ENCODE measurements at regions of chr11 and their contacts with region 1.

Region 1: DNA sequence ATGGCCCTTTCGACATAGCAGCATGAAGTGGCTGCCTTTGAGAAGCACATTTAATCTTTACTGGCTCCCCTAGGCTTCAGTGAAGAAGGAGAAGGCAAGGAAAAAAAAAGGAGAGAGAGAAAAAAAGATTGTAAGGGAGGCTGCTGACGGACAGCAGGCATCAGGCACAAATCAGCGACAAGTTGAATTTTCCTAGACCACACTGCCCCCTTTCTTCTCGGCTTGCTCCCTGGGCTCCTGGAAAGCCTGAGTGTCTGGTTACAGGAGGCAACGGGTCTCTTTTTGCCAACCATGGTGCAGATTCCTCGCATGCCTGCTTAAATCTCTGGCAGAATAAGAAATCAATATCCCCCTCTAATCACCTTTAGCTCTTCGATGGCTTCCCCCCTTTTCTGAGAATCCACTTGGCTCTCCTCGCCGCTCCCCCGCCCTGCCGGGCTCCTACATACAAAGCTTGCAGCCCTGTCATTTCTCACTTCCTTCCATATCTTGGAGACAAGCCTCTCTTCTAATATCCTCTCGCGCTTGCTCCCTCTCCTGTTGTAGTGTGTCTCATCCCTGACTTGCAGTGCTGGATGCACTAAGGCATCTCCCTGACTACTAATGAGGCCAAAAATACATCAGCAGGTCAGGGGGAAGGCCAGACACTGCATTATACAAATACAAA is 14.3 kb downstream of the BLID start:
- DNase-seq: no peak
- H3K4me3 ChIP-seq: peak overlapping the region; percentile 53 to 56
- H3K27ac ChIP-seq: peak overlapping the region; percentile 87
- H3K4me1 ChIP-seq: peaks cover 11% of the 10 kb centered on the region
- H3K27me3 ChIP-seq: no peaks in the 10 kb centered on the region
- CTCF ChIP-seq: peak in 2 of 3 experiments; percentile 53 to 54
- POLR2A ChIP-seq: peak in 1 of 2 donors; percentile 5

Region 2: DNA sequence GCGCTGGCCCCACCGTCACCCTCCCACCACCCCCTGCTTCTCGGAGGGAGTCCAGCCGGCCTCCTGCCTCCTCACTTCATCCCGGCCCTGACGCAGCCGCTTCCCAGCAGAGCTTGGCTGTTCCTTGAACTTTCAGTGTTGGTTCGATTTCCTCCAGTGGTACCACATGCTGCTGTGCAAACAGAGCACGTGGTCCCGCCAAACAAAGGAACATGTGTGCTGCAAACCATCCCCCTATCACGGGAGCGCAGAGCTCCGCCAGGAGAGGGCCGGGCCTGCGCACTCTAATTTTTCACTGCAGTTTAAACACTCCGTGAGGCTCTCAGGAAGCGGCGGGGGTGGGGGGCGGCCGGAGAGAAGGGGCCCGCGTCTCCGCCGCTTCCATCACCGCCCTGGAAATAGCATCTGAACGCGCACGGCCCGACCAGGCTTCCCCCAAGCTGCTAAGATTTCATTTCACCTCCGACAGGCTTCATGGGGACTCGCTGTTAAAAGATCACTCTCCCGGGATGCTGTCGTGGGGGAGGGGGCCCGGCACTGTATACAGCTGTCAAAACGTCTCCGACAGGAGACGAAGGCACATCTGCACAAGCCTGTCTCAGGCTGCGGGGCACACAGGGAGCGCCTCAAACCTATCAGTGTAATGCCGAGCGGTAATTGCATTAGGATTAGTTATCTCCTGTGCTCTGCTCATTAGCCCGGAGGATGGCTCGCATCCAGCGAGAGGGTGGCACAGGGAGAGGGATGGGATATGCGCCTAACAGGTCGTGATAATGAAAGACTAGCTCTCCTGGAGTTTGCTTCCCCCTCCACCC is 379.1 kb before region 1 on chr11:
- intact Hi-C with region 1: loop called (anchors 2 kb)
- DNase-seq: peak in 1 of 2 donors; percentile 93
- H3K4me3 ChIP-seq: peak overlapping the region; percentile 37 to 48
- H3K27ac ChIP-seq: peak overlapping the region; percentile 79
- H3K4me1 ChIP-seq: peaks cover 6% of the 10 kb centered on the region
- H3K27me3 ChIP-seq: no peaks in the 10 kb centered on the region
- CTCF ChIP-seq: no peak
- POLR2A ChIP-seq: peak in 1 of 2 donors; percentile 46

Region 3: DNA sequence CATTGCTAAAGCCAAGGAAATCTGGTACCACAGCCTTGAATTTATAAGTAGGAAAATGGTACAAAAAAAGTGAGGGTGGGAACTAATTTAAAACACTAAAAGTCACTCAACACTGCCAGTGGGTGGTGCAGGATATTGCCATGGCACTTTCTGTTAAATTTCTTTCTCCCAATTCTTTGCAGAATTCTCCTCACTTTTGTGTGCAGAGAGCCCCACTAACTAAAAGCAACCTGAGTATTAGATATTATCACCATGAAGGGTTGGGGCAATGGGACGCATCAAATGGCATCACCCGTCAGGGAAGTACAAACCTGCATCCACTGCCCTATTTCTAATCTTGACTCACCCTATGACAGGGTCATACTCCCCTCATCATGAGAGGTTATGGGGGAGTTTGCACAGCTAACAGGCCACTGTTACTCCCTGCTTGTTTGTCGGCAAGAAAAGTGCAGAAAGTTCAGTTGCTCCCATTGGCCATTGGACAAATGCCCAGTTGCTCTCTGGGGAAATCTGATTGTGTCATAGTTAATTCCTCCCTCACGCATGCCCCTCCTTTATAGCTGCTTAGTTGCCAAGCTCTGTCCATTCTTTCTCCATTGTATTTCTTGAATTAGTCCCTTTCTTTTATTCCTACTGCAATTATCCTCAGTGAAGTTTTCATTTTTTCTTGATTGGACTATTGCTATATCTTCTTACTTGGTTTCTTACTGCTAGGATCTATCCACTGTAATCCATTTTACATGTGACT is 108.0 kb after region 1 on chr11:
- intact Hi-C with region 1: loop called (anchors 5 kb)
- DNase-seq: no peak
- H3K4me3 ChIP-seq: no peak overlapping the region
- H3K27ac ChIP-seq: peak overlapping the region; percentile 70
- H3K4me1 ChIP-seq: peaks cover 44% of the 10 kb centered on the region
- H3K27me3 ChIP-seq: no peaks in the 10 kb centered on the region
- CTCF ChIP-seq: no peak
- POLR2A ChIP-seq: no peak

Measured in vagina (tissue), 2 donors.